Heart right ventricle (tissue), 16 donors: ENCODE measurements at regions of chr7 and their contacts with region 1.

Region 1: GRCh38 chr7:107579885-107580715 is at the start of gene BCAP29:
- DNase-seq: peak; percentile 83 to 84
- ATAC-seq: peak; percentile 93 to 98 (median 96)
- H3K4me3 ChIP-seq: peak within 1 kb of the TSS; percentile 56 to 90 (median 74)
- H3K27ac ChIP-seq: peak within 1 kb of the TSS; percentile 95 to 99 (median 98)
- H3K4me1 ChIP-seq: peaks cover 0 to 53% (median 31%) of the 10 kb centered on the region in 9 donors
- H3K27me3 ChIP-seq: no peaks in the 10 kb centered on the region
- CTCF ChIP-seq: peak; percentile 7 to 66 (median 42)
- total RNA-seq, gene BCAP29: 94.7 to 141 (median 118) TPM

Region 2: DNA sequence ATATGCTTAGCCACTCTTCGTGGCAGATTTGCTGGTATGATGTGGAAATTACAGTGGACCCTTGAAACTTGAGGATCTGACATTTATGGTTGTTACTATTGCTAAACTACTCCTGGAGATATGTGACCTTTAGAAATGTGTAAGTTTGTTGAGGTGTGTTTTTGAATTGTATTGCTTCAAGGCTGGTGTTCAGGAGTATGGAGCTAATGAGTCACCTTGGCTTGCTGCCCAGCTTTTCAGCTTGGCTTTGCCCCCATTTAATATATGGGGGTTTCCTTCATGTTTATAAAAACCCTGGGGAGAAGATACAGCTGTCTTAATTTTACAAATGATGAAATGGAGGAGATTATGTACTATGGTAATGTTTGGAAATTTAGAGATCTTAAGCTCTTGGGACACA is 399.7 kb before region 1 on chr7:
- intact Hi-C with region 1: no loop called
- DNase-seq: no peak
- ATAC-seq: peak in 5 of 8 donors; percentile 32 to 66 (median 46)
- H3K4me3 ChIP-seq: no peak overlapping the region
- H3K27ac ChIP-seq: peak overlapping the region in 3 of 10 donors; percentile 6 to 36 (median 15)
- H3K4me1 ChIP-seq: peaks cover 0 to 77% (median 45%) of the 10 kb centered on the region in 9 donors
- H3K27me3 ChIP-seq: no peaks in the 10 kb centered on the region
- CTCF ChIP-seq: no peak

Region 3: DNA sequence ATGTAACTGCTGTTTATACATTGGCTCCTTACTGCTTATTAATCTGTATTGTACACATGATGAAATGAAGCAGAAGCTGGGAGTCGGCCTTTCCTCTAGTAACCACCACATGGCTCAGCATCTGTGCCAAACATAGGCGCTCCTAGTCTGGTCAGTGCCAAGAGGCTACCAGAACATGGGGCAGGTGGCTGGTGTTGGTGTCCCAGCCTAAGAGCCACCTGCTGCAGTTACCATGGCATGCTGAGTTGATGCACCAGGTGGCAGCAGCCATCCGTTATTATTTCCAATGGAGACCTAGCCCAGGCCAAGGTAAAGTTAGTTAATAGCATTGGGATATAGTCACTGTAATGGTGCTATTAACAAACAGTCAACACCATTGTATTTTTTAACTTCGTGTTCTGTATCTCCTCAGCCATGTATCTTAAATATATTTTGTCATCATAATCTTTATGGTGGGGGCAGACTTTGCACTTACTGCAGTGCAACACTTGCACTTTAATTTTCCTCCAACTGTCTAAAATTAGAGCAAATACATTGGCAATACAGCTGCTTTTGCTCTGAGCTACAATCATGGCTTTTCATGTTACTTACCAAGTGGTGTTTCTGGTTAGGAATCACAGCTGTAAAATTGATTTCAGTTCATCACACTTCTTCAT is 378.2 kb before region 1 on chr7:
- intact Hi-C with region 1: loop called in 3 of 10 experiments (anchors 2 to 10 kb)
- DNase-seq: peak; percentile 50 to 51
- ATAC-seq: peak; percentile 79 to 94 (median 86)
- H3K4me3 ChIP-seq: no peak overlapping the region
- H3K27ac ChIP-seq: peak overlapping the region in 6 of 10 donors; percentile 18 to 56 (median 46)
- H3K4me1 ChIP-seq: peaks cover 0 to 15% (median 2%) of the 10 kb centered on the region in 9 donors
- H3K27me3 ChIP-seq: no peaks in the 10 kb centered on the region
- CTCF ChIP-seq: peak in 8 of 9 donors; percentile 29 to 73 (median 62)

Region 4: GRCh38 chr7:107471292-107472070 is 108.6 kb before region 1 on chr7:
- intact Hi-C with region 1: loop called in 4 of 10 experiments (anchors 5 to 10 kb)
- DNase-seq: no peak
- ATAC-seq: peak in 3 of 8 donors; percentile 58 to 70 (median 62)
- H3K4me3 ChIP-seq: peak overlapping the region; percentile 5 to 49 (median 34)
- H3K27ac ChIP-seq: peak overlapping the region; percentile 46 to 86 (median 78)
- H3K4me1 ChIP-seq: peaks cover 0 to 17% (median 0%) of the 10 kb centered on the region in 9 donors
- H3K27me3 ChIP-seq: no peaks in the 10 kb centered on the region
- CTCF ChIP-seq: peak in 3 of 9 donors; percentile 33 to 40 (median 37)

Region 5: DNA sequence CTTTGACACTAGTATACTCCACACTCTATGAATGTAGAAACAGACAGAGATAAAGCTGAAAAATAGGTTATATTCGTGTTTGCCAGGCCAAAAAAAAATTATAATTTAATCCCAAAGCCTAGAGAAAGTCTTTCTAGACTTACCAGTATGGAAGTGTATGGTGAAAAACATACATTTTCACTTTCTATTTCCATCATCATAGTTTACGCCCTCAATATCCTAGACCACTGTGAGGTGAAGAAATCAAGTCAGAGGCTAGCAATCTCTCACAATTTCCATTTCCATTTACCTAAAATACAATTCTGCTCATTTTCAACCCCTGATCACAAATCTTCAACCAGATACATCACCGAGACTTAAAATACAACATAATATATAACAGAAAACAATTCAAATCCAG is 94.1 kb before region 1 on chr7:
- intact Hi-C with region 1: no loop called
- DNase-seq: no peak
- ATAC-seq: no peak
- H3K4me3 ChIP-seq: no peak overlapping the region
- H3K27ac ChIP-seq: no peak overlapping the region
- H3K4me1 ChIP-seq: peaks cover 0 to 12% (median 0%) of the 10 kb centered on the region in 9 donors
- H3K27me3 ChIP-seq: no peaks in the 10 kb centered on the region
- CTCF ChIP-seq: no peak

Region 6: DNA sequence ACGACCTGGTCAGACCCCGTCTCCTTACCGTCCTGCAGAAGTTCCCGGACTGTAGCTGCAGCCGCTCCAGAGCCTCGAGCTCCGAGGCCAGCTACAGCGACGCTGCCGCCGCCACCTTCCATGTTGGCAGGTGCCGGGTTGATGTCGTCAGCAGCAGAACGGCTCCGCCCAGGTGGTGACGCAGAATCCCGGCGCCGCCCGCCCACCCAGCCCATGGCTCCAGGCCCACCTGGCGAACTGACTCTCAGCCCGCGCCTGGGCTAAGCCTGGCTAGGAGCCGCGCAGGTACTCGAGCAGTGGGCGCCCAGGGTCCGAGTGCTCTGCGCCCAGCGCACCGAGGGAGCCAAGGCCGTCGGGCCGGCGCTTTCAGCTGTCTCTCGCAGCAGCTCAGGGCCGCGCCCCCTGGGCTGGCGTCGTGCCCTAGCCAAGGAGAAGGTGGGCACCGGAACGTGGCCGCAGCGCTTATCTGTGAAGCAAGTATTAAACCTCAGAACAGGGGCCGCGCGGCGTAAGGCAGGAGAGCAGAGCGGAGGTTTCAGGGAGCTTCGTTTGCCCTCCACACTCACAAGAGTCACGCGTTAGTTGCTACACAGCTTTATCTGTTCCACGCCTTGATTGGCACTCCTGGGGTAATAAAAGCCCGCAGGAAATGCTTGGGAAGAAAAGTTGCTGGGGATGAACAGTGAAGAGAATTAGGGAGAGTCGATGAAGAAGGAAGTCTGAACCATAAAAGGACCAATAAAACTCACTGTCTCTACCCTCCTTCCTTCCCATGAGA is 16.1 kb before region 1 on chr7 and contains the starts of genes COG5 and DUS4L:
- intact Hi-C with region 1: loop called in 2 of 10 experiments (anchors 2 kb)
- DNase-seq: peak; percentile 85 to 86
- ATAC-seq: peak; percentile 94 to 98 (median 96)
- H3K4me3 ChIP-seq: peak within 1 kb of the TSS; percentile 68 to 99 (median 87)
- H3K27ac ChIP-seq: peak within 1 kb of the TSS; percentile 88 to 98 (median 94)
- H3K4me1 ChIP-seq: peaks cover 0 to 57% (median 49%) of the 10 kb centered on the region in 9 donors
- H3K27me3 ChIP-seq: no peaks in the 10 kb centered on the region
- CTCF ChIP-seq: peak in 1 of 9 donors; percentile 3
- total RNA-seq, gene COG5: 44.2 to 65.8 (median 53.0) TPM
- total RNA-seq, gene DUS4L: 6.6 to 10.6 (median 9.0) TPM

Region 7: DNA sequence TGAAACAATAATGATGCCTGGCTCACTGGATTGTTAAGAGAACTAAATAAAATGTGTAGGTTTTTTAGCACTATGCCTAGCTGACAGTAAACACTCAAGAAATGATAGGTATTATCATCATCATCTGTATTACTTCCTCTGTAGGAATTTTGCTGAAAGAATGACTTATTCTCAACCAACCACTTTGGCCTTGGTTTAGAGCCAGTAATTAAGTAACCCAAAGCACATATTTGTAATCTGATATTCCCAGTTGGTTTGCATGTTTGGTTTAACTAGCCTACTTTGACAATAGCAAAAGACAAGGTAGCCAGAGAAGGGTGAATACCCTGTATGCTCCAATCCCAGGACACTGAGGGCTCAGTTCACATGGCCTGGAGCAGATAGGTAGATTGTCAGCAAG is 34.3 kb after region 1 on chr7:
- intact Hi-C with region 1: no loop called
- DNase-seq: no peak
- ATAC-seq: no peak
- H3K4me3 ChIP-seq: no peak overlapping the region
- H3K27ac ChIP-seq: peak overlapping the region in 1 of 10 donors; percentile 37
- H3K4me1 ChIP-seq: peaks cover 0 to 29% (median 12%) of the 10 kb centered on the region in 9 donors
- H3K27me3 ChIP-seq: no peaks in the 10 kb centered on the region
- CTCF ChIP-seq: no peak

Region 8: GRCh38 chr7:107725151-107725740 is 145.1 kb after region 1 on chr7:
- intact Hi-C with region 1: loop called in 1 of 10 experiments (anchors 5 kb)
- DNase-seq: peak in 1 of 2 donors; percentile 42
- ATAC-seq: no peak
- H3K4me3 ChIP-seq: no peak overlapping the region
- H3K27ac ChIP-seq: no peak overlapping the region
- H3K4me1 ChIP-seq: no peaks in the 10 kb centered on the region
- H3K27me3 ChIP-seq: peaks cover 0 to 9% (median 0%) of the 10 kb centered on the region in 7 donors
- CTCF ChIP-seq: peak; percentile 57 to 83 (median 74)

Region 9: DNA sequence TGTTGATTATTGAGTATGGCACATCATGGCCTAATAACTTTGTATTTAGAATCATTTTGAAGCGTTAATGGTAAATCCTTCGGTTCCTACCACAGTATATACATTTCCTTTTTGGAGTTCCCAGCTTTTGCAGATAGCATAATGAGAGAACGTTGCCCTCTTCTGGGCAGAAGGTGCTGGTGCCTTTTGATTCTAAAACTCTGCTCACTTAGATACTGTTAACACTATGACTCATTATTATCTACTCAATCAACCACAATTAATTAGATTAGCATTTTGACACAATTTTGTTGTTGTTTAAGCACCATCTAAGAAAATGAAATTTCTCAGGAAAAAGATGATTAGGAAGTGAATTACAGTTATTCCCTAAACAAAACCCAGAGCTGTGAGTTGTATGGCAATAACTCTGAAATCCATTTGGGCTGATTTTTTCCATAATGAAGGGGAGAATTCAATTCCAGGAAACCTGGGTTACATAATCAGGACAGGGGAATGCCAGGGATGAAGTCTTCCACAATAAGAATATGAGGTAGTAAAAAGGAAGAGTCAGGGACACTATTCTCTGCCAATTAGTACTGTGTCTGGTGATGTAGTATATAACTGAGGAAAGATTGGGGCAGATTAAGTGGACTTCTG is 299.4 kb after region 1 on chr7:
- intact Hi-C with region 1: loop called in 1 of 10 experiments (anchors 10 kb)
- DNase-seq: no peak
- ATAC-seq: peak; percentile 62 to 79 (median 69)
- H3K4me3 ChIP-seq: no peak overlapping the region
- H3K27ac ChIP-seq: no peak overlapping the region
- H3K4me1 ChIP-seq: peaks cover 0 to 17% (median 0%) of the 10 kb centered on the region in 9 donors
- H3K27me3 ChIP-seq: peaks cover 0 to 4% (median 0%) of the 10 kb centered on the region in 7 donors
- CTCF ChIP-seq: peak; percentile 33 to 83 (median 72)